ENCODE measurements at regions of chr21 and their contacts with region 1.

Region 1: GRCh38 chr21:41678944-41679343 is 87.9 kb downstream of the RIPK4 start:
- DNase-seq: peak; percentile 99
- ATAC-seq: peak; percentile 75
- H3K4me3 ChIP-seq: peak overlapping the region; percentile 59
- H3K27ac ChIP-seq: peak overlapping the region; percentile 98
- H3K4me1 ChIP-seq: peaks cover 69% of the 10 kb centered on the region
- H3K27me3 ChIP-seq: no peaks in the 10 kb centered on the region
- CTCF ChIP-seq: no peak

Region 2: GRCh38 chr21:41321211-41321907 is 357.6 kb before region 1 on chr21:
- CTCF ChIA-PET with region 1: no interaction called
- POLR2A ChIA-PET with region 1: no interaction called
- intact Hi-C with region 1: no loop called
- DNase-seq: no peak
- ATAC-seq: no peak
- H3K4me3 ChIP-seq: no peak overlapping the region
- H3K27ac ChIP-seq: no peak overlapping the region
- H3K4me1 ChIP-seq: no peaks in the 10 kb centered on the region
- H3K27me3 ChIP-seq: peaks cover 20% of the 10 kb centered on the region
- CTCF ChIP-seq: no peak

Region 3: GRCh38 chr21:41507496-41508299 is 171.2 kb before region 1 on chr21 and contains the start of gene TMPRSS2:
- CTCF ChIA-PET with region 1: no interaction called
- POLR2A ChIA-PET with region 1: no interaction called
- intact Hi-C with region 1: loop called (anchors 10 kb)
- DNase-seq: peak; percentile 68
- ATAC-seq: peak; percentile 80
- H3K4me3 ChIP-seq: peak within 1 kb of the TSS; percentile 83
- H3K27ac ChIP-seq: peak within 1 kb of the TSS; percentile 12; the same call in 1 of the 2 replicates
- H3K4me1 ChIP-seq: peaks cover 24% of the 10 kb centered on the region
- H3K27me3 ChIP-seq: no peaks in the 10 kb centered on the region
- CTCF ChIP-seq: no peak
- total RNA-seq, gene TMPRSS2: 9.3 and 15.8 TPM in 2 replicates

Region 4: GRCh38 chr21:41631564-41632461 is 47.1 kb before region 1 on chr21:
- CTCF ChIA-PET with region 1: interaction called, 7 read pairs
- POLR2A ChIA-PET with region 1: interaction called, 18 read pairs
- intact Hi-C with region 1: loop called (anchors 1 kb)
- DNase-seq: peak; percentile 96
- ATAC-seq: peak; percentile 35
- H3K4me3 ChIP-seq: peak overlapping the region; percentile 22; the same call in 1 of the 2 replicates
- H3K27ac ChIP-seq: peak overlapping the region; percentile 99
- H3K4me1 ChIP-seq: peaks cover 75% of the 10 kb centered on the region
- H3K27me3 ChIP-seq: no peaks in the 10 kb centered on the region
- CTCF ChIP-seq: no peak

Region 5: DNA sequence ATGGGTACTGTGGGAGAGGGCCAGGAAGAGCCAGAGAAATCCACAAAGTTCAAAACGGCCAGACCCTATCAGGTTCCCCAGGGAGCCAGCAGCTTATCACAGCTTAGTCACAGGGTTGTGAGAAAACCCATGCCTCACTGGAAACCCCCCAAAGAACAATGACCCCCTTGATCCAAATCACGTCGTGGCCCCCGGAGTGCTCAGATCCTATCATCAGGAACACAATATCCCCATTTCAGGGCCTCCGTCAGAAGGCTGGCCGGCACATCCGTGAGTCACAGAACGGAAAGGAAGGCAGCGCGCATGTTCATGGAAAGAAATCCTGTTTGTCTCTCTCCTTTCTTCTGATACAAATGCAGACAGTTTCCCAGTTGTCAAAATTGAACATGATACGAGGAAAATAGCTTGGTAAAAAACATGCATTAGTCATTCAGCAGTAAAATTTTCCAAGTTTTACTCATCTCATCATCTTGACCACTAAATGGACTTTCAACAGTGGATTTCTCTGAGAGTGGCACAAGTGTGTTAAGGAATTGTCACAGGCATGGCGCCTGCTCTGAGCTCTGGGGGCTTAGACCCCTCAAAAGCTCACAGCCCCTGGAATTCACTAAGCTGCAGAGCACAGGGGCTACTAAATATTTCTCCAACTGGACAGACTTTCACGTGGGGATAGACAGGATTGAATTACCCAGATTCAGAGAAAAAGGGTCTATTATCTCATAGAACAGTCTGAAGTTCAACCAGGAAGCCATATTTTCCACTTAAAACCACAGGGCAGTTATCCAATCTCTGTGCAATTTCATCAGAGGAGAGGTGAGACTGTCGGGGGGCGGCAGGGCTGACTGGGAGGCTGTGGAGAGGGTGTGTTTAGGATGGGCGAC is 36.9 kb before region 1 on chr21:
- CTCF ChIA-PET with region 1: interaction called, 5 read pairs
- POLR2A ChIA-PET with region 1: interaction called, 9 read pairs
- intact Hi-C with region 1: loop called (anchors 1 kb)
- DNase-seq: peak; percentile 97
- ATAC-seq: peak; percentile 87
- H3K4me3 ChIP-seq: peak overlapping the region; percentile 46
- H3K27ac ChIP-seq: peak overlapping the region; percentile 99
- H3K4me1 ChIP-seq: peaks cover 36% of the 10 kb centered on the region
- H3K27me3 ChIP-seq: no peaks in the 10 kb centered on the region
- CTCF ChIP-seq: no peak

Region 6: GRCh38 chr21:41761211-41762181 is 82.6 kb after region 1 on chr21:
- CTCF ChIA-PET with region 1: interaction called, 7 read pairs
- POLR2A ChIA-PET with region 1: interaction called, 25 read pairs
- intact Hi-C with region 1: loop called (anchors 2 kb)
- DNase-seq: peak; percentile 98
- ATAC-seq: peak; percentile 65
- H3K4me3 ChIP-seq: peak overlapping the region; percentile 94
- H3K27ac ChIP-seq: peak overlapping the region; percentile 97
- H3K4me1 ChIP-seq: peaks cover 66% of the 10 kb centered on the region
- H3K27me3 ChIP-seq: no peaks in the 10 kb centered on the region
- CTCF ChIP-seq: no peak